A549 (cell line): ENCODE measurements at regions of chr3 and their contacts with region 1.

Region 1: GRCh38 chr3:4978204-4978965 is 852 bp upstream of the BHLHE40 start:
- DNase-seq: peak; percentile 94 to 98
- ATAC-seq: peak; percentile 65 to 77
- H3K4me3 ChIP-seq: peak overlapping the region; percentile 88
- H3K27ac ChIP-seq: peak overlapping the region; percentile 96 to 98
- H3K4me1 ChIP-seq: peaks cover 18% of the 10 kb centered on the region
- CTCF ChIP-seq: no peak
- EP300 ChIP-seq: no peak; a peak in 1 of 5 replicates
- POLR2A ChIP-seq: peak; percentile 6; the same call in 1 of the 2 replicates
- RAD21 ChIP-seq: peak in 1 of 2 experiments; percentile 19; a peak in 2 of 5 replicates

Region 2: GRCh38 chr3:4722103-4722502 is 256.3 kb before region 1 on chr3:
- CTCF ChIA-PET with region 1: interaction called, 602 read pairs
- POLR2A ChIA-PET with region 1: interaction called, 47 read pairs
- DNase-seq: peak; percentile 88 to 89
- ATAC-seq: peak; percentile 86 to 93
- H3K4me3 ChIP-seq: no peak overlapping the region
- H3K27ac ChIP-seq: peak overlapping the region; percentile 65 to 79
- H3K4me1 ChIP-seq: peaks cover 42% of the 10 kb centered on the region
- CTCF ChIP-seq: peak; percentile 77
- EP300 ChIP-seq: no peak
- POLR2A ChIP-seq: no peak
- RAD21 ChIP-seq: peak; percentile 93

Region 3: GRCh38 chr3:4751502-4752101 is 226.8 kb before region 1 on chr3:
- CTCF ChIA-PET with region 1: interaction called, 10 read pairs
- POLR2A ChIA-PET with region 1: no interaction called
- DNase-seq: peak; percentile 56 to 65
- ATAC-seq: peak; percentile 17 to 41; a peak in 5 of 6 replicates
- H3K4me3 ChIP-seq: no peak overlapping the region
- H3K27ac ChIP-seq: peak overlapping the region; percentile 79 to 86
- H3K4me1 ChIP-seq: peaks cover 36% of the 10 kb centered on the region
- CTCF ChIP-seq: no peak
- EP300 ChIP-seq: no peak
- POLR2A ChIP-seq: no peak
- RAD21 ChIP-seq: no peak

Region 4: GRCh38 chr3:4945296-4945695 is 33.1 kb before region 1 on chr3:
- CTCF ChIA-PET with region 1: interaction called, 11 read pairs
- POLR2A ChIA-PET with region 1: no interaction called
- DNase-seq: no peak
- ATAC-seq: no peak
- H3K4me3 ChIP-seq: no peak overlapping the region
- H3K27ac ChIP-seq: no peak overlapping the region
- H3K4me1 ChIP-seq: peaks cover 21% of the 10 kb centered on the region
- CTCF ChIP-seq: no peak
- EP300 ChIP-seq: no peak
- POLR2A ChIP-seq: no peak
- RAD21 ChIP-seq: no peak

Region 5: DNA sequence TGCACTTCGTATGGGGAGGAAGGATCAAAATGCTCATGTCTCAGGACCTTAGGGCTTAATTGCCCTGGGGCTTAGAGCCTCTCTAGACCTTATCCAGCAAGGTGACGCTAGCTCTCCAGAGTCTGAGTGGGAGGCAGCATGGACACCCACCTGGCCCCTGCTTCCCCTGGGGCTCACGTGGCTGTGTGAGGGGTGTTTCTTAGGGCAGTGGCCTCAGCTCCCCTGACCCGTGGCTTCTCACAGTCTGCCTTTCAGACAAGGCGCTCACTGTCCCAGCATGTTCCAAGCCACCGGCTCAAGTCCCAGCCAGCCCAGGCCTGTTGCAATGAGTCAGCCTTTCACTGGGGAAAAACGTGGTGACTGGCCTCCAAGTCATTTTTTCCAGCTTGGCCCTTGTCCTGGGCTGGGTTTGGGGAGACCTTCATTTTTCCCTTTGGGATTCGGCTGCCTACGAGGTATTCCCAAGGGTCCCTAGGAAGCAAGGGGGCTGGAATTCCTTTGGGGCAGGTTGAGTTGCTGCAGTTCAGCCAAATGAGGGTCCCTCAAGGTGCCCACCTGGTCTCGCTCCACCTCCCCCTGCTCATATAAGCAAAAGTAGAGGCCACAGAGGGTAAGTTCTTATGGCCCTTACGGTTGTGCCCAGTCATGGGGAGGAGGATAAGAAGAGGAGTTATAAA is 16.6 kb after region 1 on chr3:
- CTCF ChIA-PET with region 1: interaction called, 31 read pairs
- POLR2A ChIA-PET with region 1: interaction called, 8 read pairs
- DNase-seq: peak in 1 of 2 experiments; percentile 84
- ATAC-seq: peak; percentile 70 to 72
- H3K4me3 ChIP-seq: no peak overlapping the region
- H3K27ac ChIP-seq: peak overlapping the region; percentile 83 to 91
- H3K4me1 ChIP-seq: peaks cover 55% of the 10 kb centered on the region
- CTCF ChIP-seq: no peak
- EP300 ChIP-seq: no peak
- POLR2A ChIP-seq: no peak
- RAD21 ChIP-seq: no peak

Region 6: DNA sequence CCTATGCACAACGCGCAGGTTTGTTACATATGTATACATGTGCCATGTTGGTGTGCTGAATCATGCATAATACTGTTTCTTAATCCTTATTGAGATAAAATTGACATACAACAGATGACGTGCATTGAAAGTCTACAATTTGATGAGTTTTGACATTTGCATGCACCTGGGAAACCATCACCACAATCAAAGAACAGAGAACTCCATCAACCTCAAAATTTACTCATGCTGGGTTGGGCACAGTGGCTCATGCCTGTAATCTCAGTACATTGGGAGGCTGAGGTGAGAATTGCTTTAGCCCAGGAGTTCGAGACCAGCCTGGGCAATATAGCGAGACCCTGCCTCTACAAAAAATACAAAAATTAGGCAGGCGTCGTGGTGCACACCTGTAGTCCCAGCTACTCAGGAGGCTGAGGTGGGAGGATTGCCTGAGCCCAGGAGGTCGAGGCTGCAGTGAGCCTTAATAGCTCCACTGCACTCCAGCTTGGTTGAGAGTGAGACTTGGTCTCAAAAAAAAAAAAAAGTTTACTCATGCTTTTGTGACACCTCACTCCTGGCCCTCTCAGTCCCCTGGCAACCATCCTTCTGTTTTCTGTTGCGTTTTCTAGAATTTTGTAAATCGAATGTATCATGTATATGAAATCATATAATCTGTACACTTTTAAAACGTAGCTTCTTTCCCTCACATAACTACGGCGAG is 57.5 kb after region 1 on chr3:
- CTCF ChIA-PET with region 1: interaction called, 445 read pairs
- POLR2A ChIA-PET with region 1: no interaction called
- DNase-seq: no peak
- ATAC-seq: no peak; a peak in 1 of 6 replicates
- H3K4me3 ChIP-seq: no peak overlapping the region
- H3K27ac ChIP-seq: no peak overlapping the region
- H3K4me1 ChIP-seq: no peaks in the 10 kb centered on the region
- CTCF ChIP-seq: no peak
- EP300 ChIP-seq: no peak
- POLR2A ChIP-seq: no peak
- RAD21 ChIP-seq: no peak